ENCODE measurements at regions of chr2 and their contacts with region 1.

Region 1: DNA sequence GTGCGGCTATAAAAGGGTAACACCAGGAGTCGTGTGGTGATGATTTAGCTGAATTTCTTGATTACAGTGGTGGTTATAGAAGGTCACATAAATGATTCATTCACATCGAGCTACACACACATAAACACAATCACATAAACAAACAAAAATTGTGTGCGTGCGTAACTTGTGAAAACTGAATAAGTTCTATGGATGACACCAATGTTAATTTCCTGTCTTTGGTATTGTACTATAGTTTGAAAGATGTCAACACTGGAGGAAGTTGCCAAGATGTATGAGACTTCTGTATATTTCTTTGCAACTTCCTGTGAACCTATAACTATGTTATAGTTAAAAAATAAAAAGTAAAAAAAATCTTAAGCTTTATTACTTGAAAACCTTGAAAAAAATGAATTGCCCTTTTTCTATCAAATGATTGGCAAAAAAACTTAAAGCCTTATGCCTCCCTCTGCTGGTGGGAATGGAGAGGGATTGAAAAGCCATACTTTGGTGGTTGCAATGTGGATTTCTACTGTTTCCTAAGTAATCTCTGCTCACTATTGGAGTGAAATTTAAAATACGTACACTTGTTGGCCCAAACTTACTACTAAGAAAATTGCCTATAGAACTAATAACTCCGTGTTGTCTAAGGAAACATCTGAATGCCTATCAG is 227.7 kb downstream of the RPIA start:
- DNase-seq: no peak
- H3K4me3 ChIP-seq: no peak overlapping the region
- H3K27ac ChIP-seq: no peak overlapping the region
- H3K27me3 ChIP-seq: no peaks in the 10 kb centered on the region
- CTCF ChIP-seq: peak; percentile 78

Region 2: DNA sequence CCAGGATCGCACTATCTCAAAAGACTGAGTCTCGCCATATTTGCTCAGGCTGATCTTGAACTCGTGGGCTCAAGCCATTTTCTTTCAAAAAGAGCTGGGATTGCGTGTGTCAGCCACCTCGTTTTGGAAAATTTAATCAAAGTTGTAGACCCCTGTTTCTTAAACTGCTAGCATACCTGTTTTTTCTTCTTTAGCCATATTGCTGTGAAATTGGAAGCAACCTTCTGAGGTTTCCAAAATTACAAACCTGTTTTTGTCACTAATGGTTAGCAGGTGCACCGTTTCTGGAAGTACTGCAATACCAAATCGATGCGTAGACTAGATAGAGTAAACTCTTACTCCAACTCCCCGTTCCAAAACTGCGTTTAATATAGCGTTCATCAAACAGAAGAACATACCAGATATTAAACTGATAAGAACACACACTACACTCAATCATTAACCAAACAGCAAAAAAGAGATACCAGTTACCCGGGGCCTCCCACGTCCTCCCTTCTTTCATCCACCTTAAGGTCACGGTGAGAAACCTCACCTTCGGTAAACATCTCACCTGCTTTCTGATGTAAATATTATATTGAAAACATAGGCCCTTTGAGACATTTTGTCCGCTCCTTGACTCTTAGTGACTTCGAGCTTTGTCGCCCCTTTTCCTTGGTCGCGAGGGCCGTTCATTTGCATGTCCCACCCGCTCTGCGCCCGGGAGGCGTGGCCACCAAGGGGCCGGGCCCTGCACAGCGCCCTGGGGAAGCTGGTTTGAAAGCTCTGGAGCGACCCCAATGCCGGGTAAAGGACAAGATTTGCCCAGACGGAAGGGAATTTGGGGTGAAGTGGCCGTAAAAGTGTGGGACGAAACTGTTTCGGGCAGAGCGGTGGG is 902.9 kb before region 1 on chr2 and contains the start of gene RNU2-63P:
- CTCF ChIA-PET with region 1: no interaction called
- POLR2A ChIA-PET with region 1: no interaction called
- DNase-seq: peak; percentile 84
- H3K4me3 ChIP-seq: peak within 1 kb of the TSS; percentile 74
- H3K27ac ChIP-seq: peak within 1 kb of the TSS; percentile 47
- H3K27me3 ChIP-seq: no peaks in the 10 kb centered on the region
- CTCF ChIP-seq: no peak
- polyA plus RNA-seq, gene RNU2-63P: not detected in 2 replicates

Region 3: GRCh38 chr2:88638743-88639142 is 280.5 kb before region 1 on chr2:
- CTCF ChIA-PET with region 1: no interaction called
- POLR2A ChIA-PET with region 1: no interaction called
- DNase-seq: no peak
- H3K4me3 ChIP-seq: no peak overlapping the region
- H3K27ac ChIP-seq: no peak overlapping the region
- H3K27me3 ChIP-seq: peaks cover 3% of the 10 kb centered on the region
- CTCF ChIP-seq: no peak

Region 4: GRCh38 chr2:88841224-88841929 is 77.8 kb before region 1 on chr2:
- CTCF ChIA-PET with region 1: no interaction called
- POLR2A ChIA-PET with region 1: no interaction called
- DNase-seq: no peak
- H3K4me3 ChIP-seq: no peak overlapping the region
- H3K27ac ChIP-seq: no peak overlapping the region
- H3K27me3 ChIP-seq: no peaks in the 10 kb centered on the region
- CTCF ChIP-seq: no peak

Region 5: GRCh38 chr2:88874063-88874657 is 45.1 kb before region 1 on chr2:
- CTCF ChIA-PET with region 1: interaction called, 27 read pairs
- POLR2A ChIA-PET with region 1: no interaction called
- DNase-seq: no peak
- H3K4me3 ChIP-seq: no peak overlapping the region
- H3K27ac ChIP-seq: no peak overlapping the region
- H3K27me3 ChIP-seq: no peaks in the 10 kb centered on the region
- CTCF ChIP-seq: peak; percentile 80

Region 6: DNA sequence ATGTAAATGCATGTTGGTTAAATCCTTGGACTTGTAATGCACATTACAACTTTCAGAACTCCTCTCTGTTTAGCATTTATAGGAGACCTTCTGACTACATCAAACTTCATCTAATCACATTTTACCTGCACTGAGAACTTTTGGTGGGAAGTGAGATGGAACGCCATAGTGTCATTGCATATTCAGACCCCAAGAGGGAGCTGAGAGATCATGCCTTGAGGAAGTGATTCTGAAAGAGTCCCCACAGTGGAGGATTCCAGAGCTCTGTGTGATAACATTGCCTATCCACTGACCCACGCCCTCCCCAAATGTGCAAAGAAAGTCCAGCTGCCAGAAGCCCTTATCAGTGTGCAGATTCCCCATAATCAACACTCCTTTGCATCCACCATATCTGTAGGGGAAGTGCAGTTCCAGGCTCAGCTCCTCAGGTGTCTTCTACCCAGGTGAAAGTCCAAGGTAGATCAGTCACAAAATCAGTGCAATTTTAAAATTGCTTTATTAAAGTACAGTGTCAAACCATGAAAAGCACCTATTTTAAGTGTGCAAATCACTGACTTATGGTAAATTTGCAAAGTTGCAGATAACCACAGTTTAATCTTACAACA is 15.4 kb before region 1 on chr2:
- CTCF ChIA-PET with region 1: interaction called, 18 read pairs
- POLR2A ChIA-PET with region 1: no interaction called
- DNase-seq: no peak
- H3K4me3 ChIP-seq: no peak overlapping the region
- H3K27ac ChIP-seq: no peak overlapping the region
- H3K27me3 ChIP-seq: no peaks in the 10 kb centered on the region
- CTCF ChIP-seq: peak; percentile 76

Measured in AG04450 (cell line).